Caco-2 (cell line): ENCODE measurements at regions of chr7 and their contacts with region 1.

Region 1: DNA sequence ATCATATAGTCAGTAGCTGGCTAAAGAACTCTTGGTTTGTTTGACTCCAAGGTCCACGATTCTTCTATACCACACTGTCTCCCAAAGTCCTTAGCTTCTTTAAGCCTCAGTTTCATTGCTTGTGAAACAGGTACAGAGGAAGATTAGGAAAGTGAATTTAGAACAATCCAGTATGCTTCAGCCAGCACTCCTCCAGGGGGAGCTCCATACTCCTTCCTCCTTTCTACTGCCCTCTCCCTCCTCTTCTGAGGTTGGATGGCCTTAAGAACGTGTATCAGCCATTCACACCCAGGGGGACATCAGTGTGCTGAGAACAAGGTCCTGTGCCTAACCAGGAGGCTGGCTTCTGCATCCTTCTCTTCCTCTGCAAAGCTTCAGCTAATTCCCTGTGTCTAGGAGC is 54.8 kb upstream of the CALD1 start:
- DNase-seq: peak; percentile 40 to 61
- H3K4me3 ChIP-seq: no peak overlapping the region
- H3K4me3 Mint-ChIP-seq: no peak overlapping the region
- H3K27ac Mint-ChIP-seq: no peak overlapping the region
- H3K4me1 ChIP-seq: 0 out of 2 replicates have a peak, but pooled peaks cover 5% of the 10 kb centered on the region
- H3K4me1 Mint-ChIP-seq: peaks cover 8% of the 10 kb centered on the region
- H3K27me3 ChIP-seq: no peaks in the 10 kb centered on the region
- H3K27me3 Mint-ChIP-seq: no peaks in the 10 kb centered on the region
- CTCF ChIP-seq: peak; percentile 61

Region 2: DNA sequence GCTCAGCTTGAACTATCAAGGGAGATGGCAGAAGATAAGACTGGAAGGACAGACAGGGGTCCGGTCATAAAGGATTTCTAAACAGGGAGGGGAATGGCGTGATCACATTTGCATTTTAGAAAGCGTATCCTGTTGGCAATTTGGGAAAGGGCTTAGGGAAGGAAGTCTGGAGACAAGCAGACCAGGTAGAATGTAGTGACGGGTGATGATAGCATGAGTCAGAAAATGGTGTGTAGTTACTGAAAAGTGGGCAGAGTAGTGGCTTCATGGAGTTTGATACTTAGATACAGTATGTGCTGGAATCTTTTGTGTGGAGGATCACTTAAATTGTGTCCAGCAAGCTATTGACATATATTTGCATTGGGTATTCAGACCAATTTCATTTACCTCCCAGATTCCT is 536.3 kb before region 1 on chr7:
- CTCF ChIA-PET with region 1: no interaction called
- POLR2A ChIA-PET with region 1: no interaction called
- intact Hi-C with region 1: no loop called
- DNase-seq: no peak
- H3K4me3 ChIP-seq: no peak overlapping the region
- H3K4me3 Mint-ChIP-seq: no peak overlapping the region
- H3K27ac Mint-ChIP-seq: no peak overlapping the region
- H3K4me1 ChIP-seq: no peaks in the 10 kb centered on the region
- H3K4me1 Mint-ChIP-seq: no peaks in the 10 kb centered on the region
- H3K27me3 ChIP-seq: no peaks in the 10 kb centered on the region
- H3K27me3 Mint-ChIP-seq: peaks cover 6% of the 10 kb centered on the region
- CTCF ChIP-seq: no peak

Region 3: DNA sequence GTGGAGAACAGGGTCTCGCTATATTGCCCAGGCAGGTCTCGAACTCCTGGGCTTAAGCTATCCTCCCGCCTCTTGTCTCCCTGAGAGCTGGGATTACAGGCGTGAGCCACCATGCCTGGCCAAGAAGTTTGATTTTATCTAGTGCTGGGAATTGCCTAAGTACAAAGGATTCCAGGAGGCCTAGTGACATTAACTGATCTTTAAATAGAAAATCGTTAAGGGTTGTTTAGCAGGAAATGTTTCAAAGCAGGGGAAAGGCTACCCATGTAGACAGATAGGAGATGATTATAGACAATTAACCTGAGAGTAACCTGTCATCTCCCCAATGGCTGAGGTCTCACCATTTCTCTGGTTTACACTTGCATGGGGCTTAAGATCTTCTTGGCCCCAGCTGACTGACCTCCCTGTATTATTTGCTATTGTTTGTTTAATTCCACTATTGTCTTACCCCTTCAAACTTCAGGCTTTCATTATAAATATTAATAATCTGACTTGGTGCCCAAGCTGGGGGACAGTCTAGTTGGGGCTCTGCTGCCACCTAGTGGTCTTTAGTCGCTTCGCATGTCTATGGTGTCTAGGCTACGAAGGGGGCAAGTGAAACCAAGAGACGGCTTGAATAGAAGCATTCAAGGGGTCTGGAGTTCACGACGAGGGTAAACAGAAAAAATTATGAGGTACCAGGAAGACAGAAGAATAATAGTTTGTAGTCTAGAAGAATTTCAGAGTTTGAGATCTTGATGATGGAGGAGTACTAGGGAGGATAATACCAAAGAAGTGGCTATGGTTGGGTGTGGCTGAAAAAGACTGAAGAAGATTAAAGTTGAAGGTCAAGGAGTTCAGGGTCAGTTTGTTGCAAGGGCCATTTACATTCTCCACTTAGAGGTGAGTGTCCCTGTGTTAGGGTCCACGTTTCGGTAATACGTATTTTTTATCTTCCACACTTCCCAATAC is 118.4 kb before region 1 on chr7:
- CTCF ChIA-PET with region 1: no interaction called
- POLR2A ChIA-PET with region 1: no interaction called
- intact Hi-C with region 1: no loop called
- DNase-seq: peak; percentile 47 to 59
- H3K4me3 ChIP-seq: no peak overlapping the region
- H3K4me3 Mint-ChIP-seq: no peak overlapping the region
- H3K27ac Mint-ChIP-seq: no peak overlapping the region
- H3K4me1 ChIP-seq: peaks cover 7% of the 10 kb centered on the region; the same call in 1 of the 2 replicates
- H3K4me1 Mint-ChIP-seq: peaks cover 7% of the 10 kb centered on the region
- H3K27me3 ChIP-seq: peaks cover under 1% of the 10 kb centered on the region
- H3K27me3 Mint-ChIP-seq: peaks cover 7% of the 10 kb centered on the region
- CTCF ChIP-seq: peak; percentile 90 to 91

Region 4: GRCh38 chr7:134741907-134742635 is 17.5 kb after region 1 on chr7:
- CTCF ChIA-PET with region 1: no interaction called
- POLR2A ChIA-PET with region 1: no interaction called
- intact Hi-C with region 1: no loop called
- DNase-seq: peak; percentile 20 to 67
- H3K4me3 ChIP-seq: no peak overlapping the region
- H3K4me3 Mint-ChIP-seq: no peak overlapping the region
- H3K27ac Mint-ChIP-seq: peak overlapping the region; percentile 74
- H3K4me1 ChIP-seq: peaks cover 23% of the 10 kb centered on the region
- H3K4me1 Mint-ChIP-seq: peaks cover 20% of the 10 kb centered on the region
- H3K27me3 ChIP-seq: no peaks in the 10 kb centered on the region; the same call in 1 of the 2 replicates
- H3K27me3 Mint-ChIP-seq: no peaks in the 10 kb centered on the region
- CTCF ChIP-seq: no peak

Region 5: DNA sequence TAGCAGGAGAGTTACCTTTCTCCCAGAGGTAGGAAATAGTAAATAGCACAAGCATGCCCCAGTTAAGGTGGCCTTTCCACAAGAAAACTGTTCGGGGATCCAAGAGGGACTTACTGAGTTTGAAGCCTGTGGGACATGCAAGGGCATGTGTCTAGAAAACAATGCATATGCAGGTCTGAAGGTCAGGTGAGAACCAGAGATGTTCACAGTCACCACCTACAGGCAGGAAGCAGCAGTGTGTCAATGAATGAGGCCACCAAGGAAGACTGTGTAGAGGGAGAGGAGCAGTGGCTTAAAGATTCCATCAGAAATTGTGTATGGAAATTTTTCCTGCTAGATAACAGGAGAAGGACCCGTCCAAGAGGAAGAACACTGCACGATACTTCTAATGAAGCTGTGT is 120.9 kb after region 1 on chr7:
- CTCF ChIA-PET with region 1: interaction called, 3 read pairs
- POLR2A ChIA-PET with region 1: no interaction called
- intact Hi-C with region 1: loop called (anchors 10 kb)
- DNase-seq: peak; percentile 48 to 53
- H3K4me3 ChIP-seq: no peak overlapping the region
- H3K4me3 Mint-ChIP-seq: no peak overlapping the region
- H3K27ac Mint-ChIP-seq: no peak overlapping the region
- H3K4me1 ChIP-seq: peaks cover 22% of the 10 kb centered on the region
- H3K4me1 Mint-ChIP-seq: peaks cover 33% of the 10 kb centered on the region
- H3K27me3 ChIP-seq: no peaks in the 10 kb centered on the region
- H3K27me3 Mint-ChIP-seq: no peaks in the 10 kb centered on the region
- CTCF ChIP-seq: peak; percentile 42 to 66

Region 6: GRCh38 chr7:134954197-134955082 is 229.8 kb after region 1 on chr7:
- CTCF ChIA-PET with region 1: no interaction called
- POLR2A ChIA-PET with region 1: no interaction called
- intact Hi-C with region 1: no loop called
- DNase-seq: no peak
- H3K4me3 ChIP-seq: no peak overlapping the region
- H3K4me3 Mint-ChIP-seq: no peak overlapping the region
- H3K27ac Mint-ChIP-seq: no peak overlapping the region
- H3K4me1 ChIP-seq: no peaks in the 10 kb centered on the region; the same call in 1 of the 2 replicates
- H3K4me1 Mint-ChIP-seq: peaks cover 4% of the 10 kb centered on the region
- H3K27me3 ChIP-seq: no peaks in the 10 kb centered on the region
- H3K27me3 Mint-ChIP-seq: no peaks in the 10 kb centered on the region
- CTCF ChIP-seq: peak; percentile 37 to 61

Region 7: DNA sequence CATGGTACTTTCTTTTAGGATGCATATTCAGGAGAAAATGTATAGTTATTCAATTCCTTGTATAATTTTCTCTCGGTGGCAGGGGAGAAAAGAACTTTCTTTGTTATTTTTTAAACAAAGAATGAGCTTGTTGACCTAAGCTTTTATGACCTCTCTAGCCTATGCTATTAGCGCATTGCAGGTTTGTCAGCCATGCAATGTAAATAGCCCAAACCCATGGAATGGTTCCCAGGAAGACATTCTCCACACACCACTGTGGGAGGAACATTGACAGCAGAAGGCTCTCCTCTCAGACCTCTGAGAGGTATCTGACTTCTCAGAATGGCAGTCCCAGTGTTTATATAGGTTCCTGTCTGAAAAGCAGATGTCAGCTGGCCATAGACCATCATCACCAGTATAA is 242.1 kb after region 1 on chr7:
- CTCF ChIA-PET with region 1: no interaction called
- POLR2A ChIA-PET with region 1: interaction called, 14 read pairs
- intact Hi-C with region 1: no loop called
- DNase-seq: peak; percentile 38 to 45
- H3K4me3 ChIP-seq: no peak overlapping the region
- H3K4me3 Mint-ChIP-seq: no peak overlapping the region
- H3K27ac Mint-ChIP-seq: peak overlapping the region; percentile 12
- H3K4me1 ChIP-seq: no peaks in the 10 kb centered on the region; the same call in 1 of the 2 replicates
- H3K4me1 Mint-ChIP-seq: peaks cover 8% of the 10 kb centered on the region
- H3K27me3 ChIP-seq: no peaks in the 10 kb centered on the region
- H3K27me3 Mint-ChIP-seq: no peaks in the 10 kb centered on the region
- CTCF ChIP-seq: no peak